ENCODE measurements at regions of chr14 and their contacts with region 1.

Region 1: GRCh38 chr14:67943947-67944346 is 124.4 kb downstream of the RAD51B start:
- DNase-seq: peak; percentile 49
- ATAC-seq: peak; percentile 89
- H3K4me3 ChIP-seq: no peak overlapping the region
- H3K27ac ChIP-seq: no peak overlapping the region
- H3K4me1 ChIP-seq: no peaks in the 10 kb centered on the region
- H3K27me3 ChIP-seq: no peaks in the 10 kb centered on the region
- CTCF ChIP-seq: peak; percentile 50 to 78 (median 68); a peak in 5 of 6 replicates
- EP300 ChIP-seq: no peak
- POLR2A ChIP-seq: no peak
- RAD21 ChIP-seq: peak; percentile 94

Region 2: GRCh38 chr14:67837011-67837624 is 106.8 kb before region 1 on chr14:
- CTCF ChIA-PET with region 1: interaction called, 22 read pairs
- POLR2A ChIA-PET with region 1: no interaction called
- RAD21 ChIA-PET with region 1: interaction called, 5 read pairs
- SMC1A ChIA-PET with region 1: interaction called, 10 read pairs
- in situ Hi-C with region 1: no loop called
- intact Hi-C with region 1: no loop called
- DNase-seq: peak; percentile 34
- ATAC-seq: peak; percentile 76
- H3K4me3 ChIP-seq: no peak overlapping the region
- H3K27ac ChIP-seq: no peak overlapping the region
- H3K4me1 ChIP-seq: no peaks in the 10 kb centered on the region
- H3K27me3 ChIP-seq: no peaks in the 10 kb centered on the region
- CTCF ChIP-seq: peak; percentile 55 to 79 (median 65); a peak in 5 of 6 replicates
- EP300 ChIP-seq: no peak
- POLR2A ChIP-seq: no peak
- RAD21 ChIP-seq: peak; percentile 85

Region 3: DNA sequence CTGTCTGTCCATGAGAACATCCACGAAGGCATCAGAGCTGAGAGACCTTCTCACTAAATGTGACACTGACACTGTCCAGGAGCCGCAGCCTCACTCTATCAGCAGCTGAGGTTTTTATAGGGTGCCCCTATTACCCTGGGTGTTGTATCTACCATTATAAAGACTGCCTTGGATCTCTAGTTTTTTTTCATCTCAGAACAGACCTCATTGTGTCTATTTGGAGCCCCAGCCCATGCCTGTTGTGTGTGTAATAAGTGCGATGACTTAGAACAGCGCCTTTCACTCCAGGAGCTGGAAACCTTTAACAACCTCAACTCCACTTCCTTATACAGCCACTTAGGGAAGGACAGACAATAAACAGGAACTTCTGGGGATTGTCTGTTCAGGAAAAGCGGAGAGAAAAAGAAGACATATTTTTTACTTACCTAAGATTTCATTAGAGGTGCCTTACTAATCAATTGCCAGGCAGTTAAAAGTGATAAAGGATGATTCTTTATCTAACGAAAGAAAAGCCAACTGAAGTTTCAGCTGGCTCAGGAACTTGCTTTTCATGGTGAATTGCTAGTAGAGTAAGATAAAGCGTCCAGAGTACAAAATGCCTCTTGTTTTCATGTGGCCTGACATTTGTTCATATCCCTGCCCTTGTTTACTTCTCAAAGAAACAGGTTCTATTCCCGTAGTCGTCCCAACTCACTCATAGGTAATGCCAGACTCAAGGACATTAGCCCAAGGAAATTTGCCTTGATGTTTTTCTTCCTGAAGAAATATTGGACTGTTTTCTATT is 296.2 kb after region 1 on chr14:
- CTCF ChIA-PET with region 1: interaction called, 110 read pairs
- POLR2A ChIA-PET with region 1: no interaction called
- RAD21 ChIA-PET with region 1: interaction called, 11 read pairs
- SMC1A ChIA-PET with region 1: interaction called, 90 read pairs
- in situ Hi-C with region 1: loop called (anchors 5 kb)
- intact Hi-C with region 1: no loop called
- DNase-seq: no peak
- ATAC-seq: no peak
- H3K4me3 ChIP-seq: no peak overlapping the region
- H3K27ac ChIP-seq: no peak overlapping the region
- H3K4me1 ChIP-seq: 0 out of 2 replicates have a peak, but pooled peaks cover 3% of the 10 kb centered on the region
- H3K27me3 ChIP-seq: no peaks in the 10 kb centered on the region
- CTCF ChIP-seq: no peak
- EP300 ChIP-seq: no peak
- POLR2A ChIP-seq: no peak
- RAD21 ChIP-seq: no peak

Region 4: DNA sequence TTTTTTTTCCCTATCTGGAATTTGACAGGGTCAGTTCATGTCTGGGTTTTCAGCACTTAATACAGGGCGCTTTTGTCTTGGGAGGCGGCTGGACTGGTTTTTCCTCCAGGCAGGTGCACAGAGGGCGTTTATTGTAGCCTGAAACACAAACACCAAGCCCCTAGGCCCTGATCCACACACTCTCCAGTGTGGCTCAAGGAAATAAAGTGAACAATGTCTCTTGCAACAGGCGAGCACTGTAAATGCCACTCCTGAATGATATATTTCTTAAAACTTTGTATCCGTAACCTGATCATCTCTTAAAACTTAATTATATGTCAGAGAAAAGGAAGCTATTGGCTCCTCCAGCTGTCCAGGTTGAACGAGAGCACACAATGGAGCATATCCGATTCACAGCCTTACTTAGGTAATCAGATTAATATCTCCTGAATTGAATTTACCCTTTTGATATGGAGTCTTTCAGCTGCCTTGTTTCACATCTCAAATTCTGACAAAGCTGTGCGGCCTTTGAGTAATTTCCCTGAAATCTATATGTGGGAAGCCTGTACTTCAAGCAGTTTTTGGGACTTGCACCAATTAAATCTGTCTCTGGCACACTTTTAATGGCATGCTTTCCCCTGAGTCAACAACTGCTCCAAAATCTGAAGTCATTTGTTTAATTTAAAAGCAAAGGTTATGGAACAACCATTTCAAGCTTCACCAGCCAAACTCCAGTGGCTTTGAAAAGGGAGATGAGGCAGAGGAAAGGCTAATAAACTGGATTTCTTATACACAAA is 363.3 kb after region 1 on chr14:
- CTCF ChIA-PET with region 1: interaction called, 5 read pairs
- POLR2A ChIA-PET with region 1: no interaction called
- RAD21 ChIA-PET with region 1: interaction called, 8 read pairs
- SMC1A ChIA-PET with region 1: interaction called, 10 read pairs
- in situ Hi-C with region 1: no loop called
- intact Hi-C with region 1: no loop called
- DNase-seq: no peak
- ATAC-seq: no peak
- H3K4me3 ChIP-seq: no peak overlapping the region; the same call in 1 of the 2 replicates
- H3K27ac ChIP-seq: peak overlapping the region; percentile 98
- H3K4me1 ChIP-seq: peaks cover 53% of the 10 kb centered on the region
- H3K27me3 ChIP-seq: no peaks in the 10 kb centered on the region
- CTCF ChIP-seq: no peak
- EP300 ChIP-seq: no peak
- POLR2A ChIP-seq: no peak
- RAD21 ChIP-seq: no peak

Region 5: DNA sequence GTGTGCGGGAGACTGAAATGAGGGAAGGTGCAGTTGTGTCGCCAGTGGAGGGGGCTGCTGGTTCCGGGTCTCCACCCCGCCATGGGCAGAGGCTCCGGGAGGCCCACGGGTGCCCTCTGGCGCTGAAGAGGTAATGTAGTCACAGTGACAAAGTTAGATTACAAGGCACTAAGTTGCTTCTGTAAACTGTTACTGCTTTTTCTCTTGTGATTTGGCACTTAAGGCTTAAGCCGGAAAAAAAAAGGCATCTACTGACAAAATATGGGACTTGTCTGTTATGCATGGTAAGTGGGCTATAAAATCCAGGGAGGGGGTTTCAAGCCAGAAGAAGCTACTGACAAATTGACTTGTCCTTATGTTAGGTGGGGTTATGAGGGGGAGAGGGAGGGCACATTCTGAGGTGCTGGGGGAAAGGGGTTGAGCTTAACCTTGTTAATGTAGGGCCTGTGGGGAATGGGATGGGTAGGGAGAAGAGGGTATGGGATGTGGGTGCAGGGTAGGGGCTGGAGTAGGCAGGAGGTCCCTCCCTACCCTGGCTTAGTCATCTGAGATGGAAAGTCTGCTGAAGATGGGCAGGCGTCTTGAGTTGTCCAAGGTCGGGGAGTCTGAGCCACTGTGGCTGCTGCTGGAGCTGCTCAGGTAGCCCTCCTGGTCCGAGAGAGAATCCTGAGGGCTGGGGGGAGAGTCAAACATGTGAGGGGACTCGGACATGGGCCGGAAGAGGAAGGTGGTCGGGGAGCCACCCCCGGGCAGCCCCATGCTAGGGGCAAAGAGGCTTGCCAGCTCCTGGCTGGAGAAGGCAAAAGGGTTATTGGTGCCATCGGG is 845.3 kb after region 1 on chr14:
- CTCF ChIA-PET with region 1: interaction called, 15 read pairs
- POLR2A ChIA-PET with region 1: interaction called, 5 read pairs
- RAD21 ChIA-PET with region 1: interaction called, 11 read pairs
- SMC1A ChIA-PET with region 1: interaction called, 6 read pairs
- in situ Hi-C with region 1: no loop called
- intact Hi-C with region 1: loop called (anchors 2 kb)
- DNase-seq: no peak
- ATAC-seq: peak; percentile 39
- H3K4me3 ChIP-seq: peak overlapping the region; percentile 97
- H3K27ac ChIP-seq: peak overlapping the region; percentile 100
- H3K4me1 ChIP-seq: peaks cover 32% of the 10 kb centered on the region
- H3K27me3 ChIP-seq: no peaks in the 10 kb centered on the region
- CTCF ChIP-seq: peak; percentile 76 to 93 (median 85); a peak in 5 of 6 replicates
- EP300 ChIP-seq: no peak
- POLR2A ChIP-seq: peak; percentile 77
- RAD21 ChIP-seq: peak; percentile 80

Region 6: DNA sequence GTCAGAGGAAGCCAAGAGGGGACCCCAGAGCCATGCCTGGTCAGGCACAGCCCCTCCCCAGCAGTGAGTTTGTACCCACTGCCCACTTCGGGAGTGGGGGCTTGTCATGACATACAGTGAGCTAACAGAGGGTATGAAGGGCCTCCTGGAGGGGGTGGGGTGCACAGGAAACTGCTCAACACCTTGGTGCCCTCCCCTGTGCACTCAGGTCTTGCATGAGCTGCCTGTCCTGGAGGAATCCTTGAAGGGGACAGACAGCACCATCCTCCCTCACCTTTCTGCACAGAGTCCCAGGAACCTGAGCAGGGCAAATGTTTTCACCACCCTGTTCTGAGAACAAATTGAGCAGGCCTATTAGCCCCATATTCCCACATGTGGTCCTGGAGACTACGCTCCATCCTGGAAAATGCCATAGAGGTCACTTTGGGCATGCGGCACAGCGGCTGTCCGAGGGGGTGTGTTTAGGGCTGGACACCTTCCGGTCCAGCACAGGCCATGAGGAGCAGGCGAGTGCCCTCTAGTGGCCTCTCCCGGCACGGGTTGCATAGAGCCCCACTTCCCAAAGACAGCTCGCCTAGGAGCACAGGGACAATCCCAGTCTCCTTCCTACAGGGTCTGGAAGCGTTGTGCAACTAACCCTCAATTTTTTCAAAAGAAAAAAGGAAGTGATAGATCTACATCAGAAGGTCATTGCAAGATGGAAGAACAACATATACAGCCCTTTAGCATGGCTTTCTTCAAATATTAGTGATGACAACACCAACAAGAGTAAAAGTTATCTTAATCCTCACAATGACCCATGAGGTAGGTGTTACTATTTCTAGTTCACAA is 880.8 kb after region 1 on chr14:
- CTCF ChIA-PET with region 1: interaction called, 51 read pairs
- POLR2A ChIA-PET with region 1: interaction called, 3 read pairs
- RAD21 ChIA-PET with region 1: interaction called, 13 read pairs
- SMC1A ChIA-PET with region 1: interaction called, 54 read pairs
- in situ Hi-C with region 1: loop called (anchors 10 kb)
- intact Hi-C with region 1: no loop called
- DNase-seq: no peak
- ATAC-seq: peak; percentile 10; the same call in 1 of the 3 replicates
- H3K4me3 ChIP-seq: no peak overlapping the region
- H3K27ac ChIP-seq: no peak overlapping the region; the same call in 1 of the 2 replicates
- H3K4me1 ChIP-seq: peaks cover 50% of the 10 kb centered on the region
- H3K27me3 ChIP-seq: no peaks in the 10 kb centered on the region
- CTCF ChIP-seq: peak; percentile 90 to 93 (median 90)
- EP300 ChIP-seq: no peak
- POLR2A ChIP-seq: no peak
- RAD21 ChIP-seq: peak; percentile 64; the same call in 1 of the 2 replicates

Measured in GM12878 (cell line).